Activated CD8-positive, alpha-beta T cell treated with anti-CD3 and anti-CD28 coated beads for 36 hours (primary cell): ENCODE measurements at regions of chr13 and their contacts with region 1.

Region 1: DNA sequence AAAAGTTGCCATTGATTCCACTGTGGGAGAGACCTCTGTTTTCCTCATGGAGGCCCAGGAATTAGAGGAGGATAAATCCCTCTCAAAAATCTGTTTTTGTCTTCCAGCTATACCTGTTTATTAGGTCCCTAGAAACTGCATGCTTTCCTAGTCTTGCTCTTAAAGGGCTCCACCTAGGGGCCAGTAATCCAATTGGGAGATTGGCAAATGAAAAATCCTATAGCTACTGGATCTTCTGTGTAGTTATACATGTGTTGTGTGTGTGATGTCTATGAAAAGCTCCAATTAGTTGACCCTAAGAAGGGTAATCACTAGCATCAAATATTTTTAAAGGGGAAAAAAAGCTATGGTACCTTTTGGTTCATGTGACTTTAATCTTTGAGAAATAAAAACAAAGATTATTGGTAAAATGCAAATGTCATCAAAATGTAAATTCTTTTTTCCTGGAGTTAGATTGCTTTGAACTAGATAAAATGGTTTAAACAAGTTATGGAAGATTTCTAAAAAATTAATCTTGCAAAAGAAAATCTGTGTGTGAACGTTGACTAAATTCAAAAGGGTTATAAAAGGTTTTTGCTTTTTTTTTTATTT is 63.4 kb upstream of the C1QTNF9B start:
- DNase-seq: peak; percentile 26
- ATAC-seq: no peak
- H3K4me3 Mint-ChIP-seq: no peak overlapping the region
- H3K27ac Mint-ChIP-seq: no peak overlapping the region
- H3K4me1 Mint-ChIP-seq: peaks cover 21% of the 10 kb centered on the region
- H3K27me3 Mint-ChIP-seq: peaks cover 3% of the 10 kb centered on the region
- CTCF ChIP-seq: peak; percentile 64

Region 2: DNA sequence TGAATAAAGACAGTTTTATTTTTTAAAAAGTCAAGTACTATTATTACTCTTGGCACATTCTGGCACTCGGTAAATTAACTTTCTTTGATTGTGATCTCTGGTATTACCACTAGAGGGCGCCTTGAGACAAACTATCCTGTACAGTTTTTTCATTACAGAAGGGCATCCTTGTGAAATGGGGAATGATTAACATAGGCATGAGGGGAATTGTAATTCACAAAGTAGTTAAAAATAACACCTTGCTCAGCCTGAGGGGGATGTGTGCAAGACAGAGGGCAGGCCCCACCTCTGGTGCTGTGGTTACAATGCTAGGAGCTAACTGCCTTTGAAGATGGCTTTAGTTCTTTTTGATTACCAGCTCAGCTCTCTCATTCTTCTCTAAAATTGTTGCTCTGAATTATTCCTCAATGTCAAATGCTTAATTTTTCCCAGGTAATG is 39.2 kb before region 1 on chr13:
- CTCF ChIA-PET with region 1: interaction called, 10 read pairs
- POLR2A ChIA-PET with region 1: no interaction called
- intact Hi-C with region 1: no loop called
- DNase-seq: peak; percentile 13
- ATAC-seq: no peak
- H3K4me3 Mint-ChIP-seq: no peak overlapping the region
- H3K27ac Mint-ChIP-seq: no peak overlapping the region
- H3K4me1 Mint-ChIP-seq: no peaks in the 10 kb centered on the region
- H3K27me3 Mint-ChIP-seq: peaks cover 27% of the 10 kb centered on the region
- CTCF ChIP-seq: peak; percentile 81

Region 3: GRCh38 chr13:23928985-23929384 is 31.7 kb before region 1 on chr13:
- CTCF ChIA-PET with region 1: interaction called, 14 read pairs
- POLR2A ChIA-PET with region 1: no interaction called
- intact Hi-C with region 1: no loop called
- DNase-seq: no peak
- ATAC-seq: no peak
- H3K4me3 Mint-ChIP-seq: no peak overlapping the region
- H3K27ac Mint-ChIP-seq: no peak overlapping the region
- H3K4me1 Mint-ChIP-seq: no peaks in the 10 kb centered on the region
- H3K27me3 Mint-ChIP-seq: peaks cover 16% of the 10 kb centered on the region
- CTCF ChIP-seq: no peak

Region 4: GRCh38 chr13:24020375-24020830 is 59.7 kb after region 1 on chr13:
- CTCF ChIA-PET with region 1: interaction called, 17 read pairs
- POLR2A ChIA-PET with region 1: no interaction called
- intact Hi-C with region 1: no loop called
- DNase-seq: peak; percentile 69
- ATAC-seq: peak; percentile 47
- H3K4me3 Mint-ChIP-seq: no peak overlapping the region
- H3K27ac Mint-ChIP-seq: no peak overlapping the region
- H3K4me1 Mint-ChIP-seq: peaks cover 8% of the 10 kb centered on the region
- H3K27me3 Mint-ChIP-seq: no peaks in the 10 kb centered on the region
- CTCF ChIP-seq: peak; percentile 79